GM12878 (cell line): ENCODE measurements at regions of chr10 and their contacts with region 1.

Region 1: DNA sequence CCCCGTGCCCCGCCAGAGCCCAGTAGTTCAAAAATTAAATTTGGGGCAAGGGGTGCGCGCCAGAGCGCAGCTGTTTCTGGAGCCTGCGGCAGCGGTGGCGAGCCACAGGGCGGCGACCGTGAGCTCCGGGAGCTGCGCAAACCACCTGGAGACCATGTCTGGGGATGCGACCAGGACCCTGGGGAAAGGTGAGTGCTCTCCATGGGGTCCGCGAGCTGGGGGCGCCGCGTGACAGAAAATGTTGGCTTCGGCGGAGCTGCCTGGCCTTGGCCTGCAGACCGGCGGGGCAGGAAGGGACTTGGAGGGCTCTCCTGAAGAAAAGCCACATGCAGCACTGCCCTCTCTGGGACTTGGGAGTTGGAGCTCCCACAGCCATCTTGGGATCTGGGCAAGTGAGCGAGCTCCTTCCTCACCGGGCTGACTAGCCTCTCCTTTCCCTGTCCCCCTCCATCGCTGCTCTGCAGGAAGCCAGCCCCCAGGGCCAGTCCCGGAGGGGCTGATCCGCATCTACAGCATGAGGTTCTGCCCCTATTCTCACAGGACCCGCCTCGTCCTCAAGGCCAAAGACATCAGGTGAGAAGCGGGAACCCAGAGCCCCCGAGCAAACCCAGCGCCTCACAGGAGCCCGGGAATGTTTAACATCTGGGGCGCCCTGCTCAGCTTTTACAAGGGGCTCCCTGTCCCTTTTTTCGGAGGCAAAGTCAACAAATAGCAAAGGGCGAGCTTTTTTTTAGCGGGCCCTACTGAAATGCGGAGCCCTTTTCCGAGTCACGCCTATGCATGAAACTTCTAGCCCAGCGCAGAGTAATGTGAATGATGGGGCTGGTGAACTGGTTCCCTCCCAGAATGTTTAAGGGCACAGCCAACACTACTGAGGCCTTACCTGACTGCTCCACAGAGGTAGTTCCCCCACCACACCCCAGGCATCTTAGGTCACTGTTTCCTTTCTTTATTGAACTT is 6.1 kb downstream of the GSTO2 start:
- DNase-seq: no peak
- ATAC-seq: peak; percentile 97
- H3K4me3 ChIP-seq: no peak overlapping the region
- H3K27ac ChIP-seq: no peak overlapping the region
- H3K4me1 ChIP-seq: no peaks in the 10 kb centered on the region
- H3K27me3 ChIP-seq: peaks cover 2% of the 10 kb centered on the region in 2 experiments; a peak in 3 of 4 replicates
- CTCF ChIP-seq: peak; percentile 69 to 97 (median 86)
- EP300 ChIP-seq: no peak
- POLR2A ChIP-seq: no peak
- RAD21 ChIP-seq: peak; percentile 36; the same call in 1 of the 2 replicates

Region 2: DNA sequence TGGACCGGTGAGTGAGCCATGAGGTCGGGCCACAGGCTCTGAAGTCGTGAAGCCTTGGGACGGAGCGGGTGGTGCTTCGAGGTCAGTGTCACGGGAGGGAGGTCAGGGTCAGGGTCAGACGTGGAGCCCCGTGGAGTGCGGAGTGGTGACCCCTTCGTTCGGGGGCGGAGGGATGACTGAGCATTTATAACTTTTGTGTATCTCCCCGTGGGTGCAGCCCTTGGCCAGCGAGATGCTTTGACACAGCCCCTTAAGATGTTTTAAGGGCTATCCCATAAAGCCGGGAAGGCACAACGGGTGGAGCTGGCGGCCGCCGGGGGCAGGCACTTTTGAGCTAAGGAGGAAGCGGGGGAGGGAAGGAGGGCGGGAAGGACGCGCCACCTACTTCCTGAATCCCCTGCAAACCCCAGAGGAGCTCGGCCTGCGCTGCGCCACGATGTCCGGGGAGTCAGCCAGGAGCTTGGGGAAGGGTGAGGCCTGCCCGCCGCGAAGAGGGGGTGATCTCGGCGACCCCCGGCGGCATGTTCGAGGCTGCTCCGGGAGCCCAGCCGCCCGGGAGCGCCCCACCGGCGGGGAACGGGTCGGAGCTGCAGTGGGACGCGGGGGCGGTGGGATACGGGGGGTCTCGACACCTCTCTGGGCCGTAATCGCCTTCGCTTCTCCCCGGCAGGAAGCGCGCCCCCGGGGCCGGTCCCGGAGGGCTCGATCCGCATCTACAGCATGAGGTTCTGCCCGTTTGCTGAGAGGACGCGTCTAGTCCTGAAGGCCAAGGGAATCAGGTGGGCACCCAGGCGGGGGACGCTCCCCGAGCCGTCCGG is 20.3 kb before region 1 on chr10 and contains the start of gene GSTO1:
- CTCF ChIA-PET with region 1: interaction called, 105 read pairs
- POLR2A ChIA-PET with region 1: interaction called, 36 read pairs
- RAD21 ChIA-PET with region 1: interaction called, 24 read pairs
- SMC1A ChIA-PET with region 1: interaction called, 30 read pairs
- in situ Hi-C with region 1: no loop called
- intact Hi-C with region 1: no loop called
- DNase-seq: peak; percentile 30
- ATAC-seq: peak; percentile 89
- H3K4me3 ChIP-seq: peak within 1 kb of the TSS; percentile 81
- H3K27ac ChIP-seq: peak within 1 kb of the TSS; percentile 89
- H3K4me1 ChIP-seq: peaks cover 8% of the 10 kb centered on the region
- H3K27me3 ChIP-seq: no peaks in the 10 kb centered on the region
- CTCF ChIP-seq: peak in 1 of 3 experiments; percentile 18; a peak in 1 of 6 replicates
- EP300 ChIP-seq: no peak
- POLR2A ChIP-seq: peak; percentile 94
- RAD21 ChIP-seq: no peak
- polyA plus RNA-seq, gene GSTO1: 53.1 to 149 TPM

Region 3: DNA sequence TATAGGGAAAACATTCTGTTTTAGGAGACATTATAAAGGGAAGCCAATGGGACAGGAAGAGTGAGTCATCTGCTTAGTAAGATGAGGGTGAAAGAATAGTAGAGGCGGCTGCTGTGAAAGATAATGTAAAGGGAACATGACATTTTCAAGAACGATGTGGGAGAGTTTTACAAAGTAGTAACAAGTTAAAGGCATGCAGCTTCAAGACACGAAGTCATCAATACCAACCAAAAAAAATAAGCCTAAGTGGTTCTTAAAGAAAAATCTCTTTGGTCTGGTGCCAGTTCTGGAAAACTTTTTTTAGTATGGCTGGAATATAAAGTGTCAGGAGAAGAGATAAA is 14.3 kb before region 1 on chr10:
- CTCF ChIA-PET with region 1: interaction called, 105 read pairs
- POLR2A ChIA-PET with region 1: interaction called, 36 read pairs
- RAD21 ChIA-PET with region 1: interaction called, 24 read pairs
- SMC1A ChIA-PET with region 1: interaction called, 30 read pairs
- in situ Hi-C with region 1: no loop called
- intact Hi-C with region 1: no loop called
- DNase-seq: no peak
- ATAC-seq: no peak
- H3K4me3 ChIP-seq: no peak overlapping the region
- H3K27ac ChIP-seq: no peak overlapping the region
- H3K4me1 ChIP-seq: peaks cover 3% of the 10 kb centered on the region; the same call in 1 of the 2 replicates
- H3K27me3 ChIP-seq: no peaks in the 10 kb centered on the region
- CTCF ChIP-seq: no peak
- EP300 ChIP-seq: no peak
- POLR2A ChIP-seq: no peak
- RAD21 ChIP-seq: no peak